ENCODE measurements at regions of chr6 and their contacts with region 1.

Region 1: DNA sequence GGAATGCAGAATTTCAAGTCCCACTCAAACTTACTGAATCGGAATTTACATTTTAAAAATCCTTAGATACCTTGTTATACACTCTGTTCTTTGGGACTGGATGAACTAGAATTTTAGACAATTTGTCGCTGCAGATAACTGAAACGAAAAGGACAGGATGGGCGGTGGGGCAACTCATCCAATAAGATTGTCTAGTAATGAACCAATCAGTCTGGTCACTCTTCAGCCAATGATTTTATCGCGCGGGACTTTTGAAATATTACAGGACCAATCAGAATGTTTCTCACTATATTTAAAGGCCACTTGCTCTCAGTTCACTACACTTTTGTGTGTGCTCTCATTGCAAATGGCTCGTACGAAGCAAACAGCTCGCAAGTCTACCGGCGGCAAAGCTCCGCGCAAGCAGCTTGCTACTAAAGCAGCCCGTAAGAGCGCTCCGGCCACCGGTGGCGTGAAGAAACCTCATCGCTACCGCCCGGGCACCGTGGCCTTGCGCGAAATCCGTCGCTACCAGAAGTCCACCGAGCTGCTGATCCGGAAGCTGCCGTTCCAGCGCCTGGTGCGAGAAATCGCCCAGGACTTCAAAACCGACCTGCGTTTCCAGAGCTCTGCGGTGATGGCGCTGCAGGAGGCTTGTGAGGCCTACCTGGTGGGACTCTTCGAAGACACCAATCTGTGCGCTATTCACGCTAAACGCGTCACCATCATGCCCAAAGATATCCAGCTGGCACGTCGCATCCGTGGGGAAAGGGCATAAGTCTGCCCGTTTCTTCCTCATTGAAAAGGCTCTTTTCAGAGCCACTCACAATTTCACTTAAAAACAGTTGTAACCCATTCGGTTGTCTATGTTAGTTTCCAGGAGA is 41.9 kb upstream of the HFE start:
- DNase-seq: no peak
- H3K4me3 ChIP-seq: peak overlapping the region; percentile 64
- CTCF ChIP-seq: no peak

Region 2: DNA sequence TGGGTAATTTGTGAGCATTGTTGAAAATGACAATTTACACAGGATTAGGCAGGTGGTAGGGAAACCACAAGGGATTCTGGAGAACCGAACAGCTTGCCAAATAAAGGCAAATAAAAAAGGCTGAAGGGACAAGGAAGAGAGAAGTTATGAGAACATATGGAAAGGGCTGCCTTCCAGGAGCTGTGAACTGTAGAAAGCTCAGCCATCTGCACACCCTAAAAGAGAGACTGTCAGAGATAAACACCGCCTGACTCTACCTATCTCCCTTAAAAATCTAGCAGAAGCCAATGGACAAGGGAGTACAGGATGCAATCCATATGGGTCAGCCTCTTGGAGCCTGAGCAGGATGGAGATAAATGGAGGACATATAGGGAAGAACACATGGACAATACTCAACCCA is 200.8 kb before region 1 on chr6:
- CTCF ChIA-PET with region 1: no interaction called
- POLR2A ChIA-PET with region 1: no interaction called
- DNase-seq: no peak
- H3K4me3 ChIP-seq: no peak overlapping the region
- CTCF ChIP-seq: no peak

Region 3: GRCh38 chr6:26006086-26006939 is 39.0 kb before region 1 on chr6:
- CTCF ChIA-PET with region 1: no interaction called
- POLR2A ChIA-PET with region 1: no interaction called
- DNase-seq: no peak
- H3K4me3 ChIP-seq: no peak overlapping the region
- CTCF ChIP-seq: no peak

Region 4: GRCh38 chr6:26025894-26026832 is 19.1 kb before region 1 on chr6:
- CTCF ChIA-PET with region 1: interaction called, 25 read pairs
- POLR2A ChIA-PET with region 1: interaction called, 98 read pairs
- DNase-seq: no peak
- H3K4me3 ChIP-seq: peak overlapping the region; percentile 84
- CTCF ChIP-seq: peak; percentile 90

Region 5: DNA sequence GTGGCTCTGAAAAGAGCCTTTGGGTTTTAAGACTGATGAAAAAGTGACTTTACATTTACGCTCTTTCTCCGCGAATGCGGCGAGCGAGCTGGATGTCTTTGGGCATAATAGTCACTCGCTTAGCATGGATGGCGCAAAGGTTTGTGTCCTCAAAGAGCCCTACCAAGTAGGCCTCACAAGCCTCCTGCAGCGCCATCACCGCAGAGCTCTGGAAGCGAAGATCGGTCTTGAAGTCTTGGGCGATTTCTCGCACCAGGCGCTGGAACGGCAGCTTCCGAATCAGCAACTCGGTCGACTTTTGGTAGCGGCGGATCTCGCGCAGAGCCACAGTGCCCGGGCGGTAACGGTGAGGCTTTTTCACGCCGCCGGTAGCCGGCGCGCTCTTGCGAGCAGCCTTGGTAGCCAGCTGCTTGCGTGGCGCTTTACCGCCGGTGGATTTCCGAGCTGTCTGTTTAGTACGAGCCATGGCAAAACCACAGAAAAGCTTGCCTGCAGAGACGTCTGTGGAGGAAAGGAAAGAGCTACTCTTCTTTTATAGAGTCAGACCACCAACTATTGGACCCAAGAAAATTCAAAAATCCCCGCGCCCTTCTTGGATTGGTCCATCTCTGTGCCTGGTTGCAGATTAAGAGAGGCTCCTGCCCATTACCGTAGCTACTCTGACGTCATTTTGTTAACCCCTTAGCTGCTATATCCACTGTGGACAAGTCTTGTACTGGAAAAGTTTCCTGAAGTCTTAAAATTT is 13.5 kb before region 1 on chr6:
- CTCF ChIA-PET with region 1: interaction called, 25 read pairs
- POLR2A ChIA-PET with region 1: interaction called, 98 read pairs
- DNase-seq: no peak
- H3K4me3 ChIP-seq: peak overlapping the region; percentile 69
- CTCF ChIP-seq: peak; percentile 20

Region 6: DNA sequence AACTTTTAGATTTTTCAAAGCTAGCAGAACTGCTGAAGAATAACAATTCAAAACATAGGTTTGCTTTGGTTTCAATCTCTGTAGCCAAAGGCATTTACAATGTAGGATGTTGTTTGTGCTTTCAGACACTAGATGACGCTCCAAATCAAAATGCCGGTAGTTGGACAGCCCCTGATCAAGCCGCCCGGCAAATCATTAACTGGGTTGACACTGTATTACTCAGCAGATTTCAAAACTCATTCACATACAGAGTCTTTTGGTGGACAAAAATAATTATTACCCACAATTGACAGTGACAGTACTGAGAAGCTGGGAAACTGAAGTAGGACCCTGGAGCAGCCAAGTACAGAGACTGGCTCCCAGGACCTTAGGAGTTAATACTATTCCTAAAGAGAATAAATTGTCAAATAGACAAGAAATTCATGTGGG is 20.7 kb after region 1 on chr6:
- CTCF ChIA-PET with region 1: interaction called, 51 read pairs
- POLR2A ChIA-PET with region 1: no interaction called
- DNase-seq: no peak
- H3K4me3 ChIP-seq: no peak overlapping the region
- CTCF ChIP-seq: peak; percentile 75

Region 7: GRCh38 chr6:26097268-26097875 is 52.1 kb after region 1 on chr6:
- CTCF ChIA-PET with region 1: interaction called, 20 read pairs
- POLR2A ChIA-PET with region 1: no interaction called
- DNase-seq: no peak
- H3K4me3 ChIP-seq: no peak overlapping the region
- CTCF ChIP-seq: peak; percentile 68

Region 8: DNA sequence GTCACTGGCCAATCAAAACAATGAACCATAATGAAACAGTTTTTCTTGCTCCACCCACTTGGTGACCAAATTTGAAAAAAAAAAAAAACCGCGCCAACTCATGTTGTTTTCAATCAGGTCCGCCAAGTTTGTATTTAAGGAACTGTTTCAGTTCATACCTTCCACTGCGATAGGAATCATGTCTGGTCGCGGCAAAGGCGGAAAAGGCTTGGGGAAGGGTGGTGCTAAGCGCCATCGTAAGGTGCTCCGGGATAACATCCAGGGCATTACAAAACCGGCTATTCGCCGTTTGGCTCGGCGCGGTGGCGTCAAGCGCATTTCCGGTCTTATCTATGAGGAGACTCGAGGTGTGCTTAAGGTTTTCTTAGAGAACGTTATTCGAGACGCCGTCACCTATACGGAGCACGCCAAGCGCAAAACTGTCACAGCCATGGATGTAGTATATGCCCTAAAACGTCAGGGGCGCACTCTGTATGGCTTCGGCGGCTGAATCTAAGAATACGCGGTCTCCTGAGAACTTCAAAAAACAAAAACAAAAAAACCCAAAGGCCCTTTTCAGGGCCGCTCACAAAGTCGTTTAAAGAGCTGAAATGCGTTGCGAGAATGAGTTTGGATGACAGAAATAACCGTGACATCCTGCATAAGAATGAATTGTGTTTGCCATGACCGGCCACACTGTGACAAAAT is 58.6 kb after region 1 on chr6:
- CTCF ChIA-PET with region 1: interaction called, 20 read pairs
- POLR2A ChIA-PET with region 1: interaction called, 13 read pairs
- DNase-seq: peak; percentile 79
- H3K4me3 ChIP-seq: peak overlapping the region; percentile 65
- CTCF ChIP-seq: peak; percentile 41

Region 9: GRCh38 chr6:26156076-26156849 is 111.0 kb after region 1 on chr6:
- CTCF ChIA-PET with region 1: interaction called, 3 read pairs
- POLR2A ChIA-PET with region 1: interaction called, 10 read pairs
- DNase-seq: peak; percentile 28
- H3K4me3 ChIP-seq: peak overlapping the region; percentile 68
- CTCF ChIP-seq: no peak